ENCODE measurements at regions of chr10 and their contacts with region 1.

Region 1: DNA sequence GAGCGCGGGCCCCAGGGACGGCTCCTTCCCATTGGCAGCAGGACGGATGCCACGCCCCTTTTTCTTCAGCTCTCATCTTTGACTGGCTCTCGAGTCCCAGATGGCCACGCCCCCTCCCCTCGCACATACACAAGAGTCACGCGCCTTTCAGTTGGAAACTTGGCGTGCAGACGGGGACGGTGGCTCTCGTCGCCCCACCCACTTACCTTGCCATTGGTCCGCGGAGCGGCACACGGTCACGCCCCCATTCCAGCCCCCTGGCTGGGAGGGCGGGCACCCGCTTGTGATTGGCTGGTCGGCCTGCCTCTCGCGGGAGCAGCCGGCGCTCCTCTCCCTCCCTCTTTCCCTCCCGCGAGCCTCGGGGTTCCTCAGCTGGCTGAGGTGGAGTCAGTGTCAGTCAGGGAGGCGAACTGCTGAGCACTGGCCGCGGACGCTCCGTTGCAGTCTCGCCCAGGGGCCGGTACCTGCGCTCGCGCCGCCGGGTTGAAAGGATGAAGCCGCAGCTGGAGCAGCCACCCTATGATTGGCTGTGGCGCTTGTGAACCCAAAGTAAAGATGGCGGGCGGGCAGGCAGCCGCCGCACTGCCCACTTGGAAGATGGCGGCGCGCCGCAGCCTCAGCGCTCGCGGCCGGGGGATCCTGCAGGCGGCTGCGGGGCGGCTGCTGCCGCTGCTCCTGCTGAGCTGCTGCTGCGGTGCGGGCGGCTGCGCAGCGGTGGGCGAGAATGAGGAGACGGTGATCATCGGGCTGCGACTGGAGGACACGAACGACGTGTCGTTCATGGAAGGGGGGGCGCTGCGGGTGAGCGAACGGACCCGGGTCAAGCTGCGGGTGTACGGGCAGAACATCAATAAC is at the start of gene CNNM2:
- DNase-seq: peak; percentile 96 to 100 (median 100)
- ATAC-seq: peak; percentile 88 to 92 (median 91)
- H3K4me3 ChIP-seq: peak within 1 kb of the TSS; percentile 83 to 91
- H3K4me3 Mint-ChIP-seq: peak within 1 kb of the TSS; percentile 91 to 93 (median 92)
- H3K27ac ChIP-seq: peak within 1 kb of the TSS; percentile 72
- H3K27ac Mint-ChIP-seq: peak within 1 kb of the TSS; percentile 90 to 98
- H3K4me1 ChIP-seq: peaks cover 21 to 27% of the 10 kb centered on the region in 2 experiments
- H3K4me1 Mint-ChIP-seq: peaks cover 52 to 55% (median 52%) of the 10 kb centered on the region in 3 donors
- H3K27me3 ChIP-seq: peaks cover 2 to 11% of the 10 kb centered on the region in 2 experiments
- H3K27me3 Mint-ChIP-seq: peaks cover 0 to 11% of the 10 kb centered on the region in 2 donors
- total RNA-seq, gene CNNM2: 11.6 to 15.4 (median 14.2) TPM

Region 2: DNA sequence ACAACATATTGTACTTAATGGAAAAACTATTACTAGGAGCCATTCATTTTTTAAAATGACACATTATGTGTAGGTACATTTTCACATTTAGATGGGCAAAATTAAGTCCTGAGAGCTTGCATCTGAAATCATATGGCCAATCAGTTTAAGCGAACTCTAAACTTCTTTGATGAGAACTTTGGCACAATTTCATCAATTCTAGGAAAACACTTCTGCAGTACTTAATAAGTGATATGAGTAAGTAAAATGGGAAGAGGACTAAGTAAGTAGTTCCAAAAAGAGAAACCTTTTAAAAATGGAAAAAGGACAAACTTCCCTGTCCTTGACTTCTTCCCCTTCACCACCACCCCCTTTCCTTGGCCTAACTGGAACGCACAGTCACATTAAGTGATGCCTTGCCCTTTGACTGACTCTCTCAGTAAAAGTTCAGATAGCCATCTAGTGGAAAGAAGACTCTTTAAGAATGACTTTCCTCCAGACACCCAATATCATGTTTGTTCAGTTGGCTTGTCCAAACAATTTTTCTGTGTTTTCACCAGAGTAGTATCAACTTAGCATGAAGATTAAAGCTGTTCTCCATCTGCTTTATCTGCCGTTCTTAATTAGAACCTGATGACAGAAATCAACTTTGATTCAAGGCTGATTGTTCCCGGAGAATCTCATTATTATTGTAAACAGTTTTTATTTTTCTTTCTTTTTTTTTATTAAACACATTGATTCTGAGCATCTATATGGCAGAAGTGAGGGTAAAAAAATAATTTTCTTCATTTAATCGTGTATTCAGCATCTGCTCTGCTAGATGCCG is 45.0 kb after region 1 on chr10:
- CTCF ChIA-PET with region 1: no interaction called
- POLR2A ChIA-PET with region 1: no interaction called
- DNase-seq: no peak
- ATAC-seq: no peak
- H3K4me3 ChIP-seq: no peak overlapping the region
- H3K4me3 Mint-ChIP-seq: no peak overlapping the region
- H3K27ac ChIP-seq: no peak overlapping the region
- H3K27ac Mint-ChIP-seq: no peak overlapping the region
- H3K4me1 ChIP-seq: no peaks in the 10 kb centered on the region
- H3K4me1 Mint-ChIP-seq: no peaks in the 10 kb centered on the region
- H3K27me3 ChIP-seq: no peaks in the 10 kb centered on the region
- H3K27me3 Mint-ChIP-seq: no peaks in the 10 kb centered on the region

Region 3: DNA sequence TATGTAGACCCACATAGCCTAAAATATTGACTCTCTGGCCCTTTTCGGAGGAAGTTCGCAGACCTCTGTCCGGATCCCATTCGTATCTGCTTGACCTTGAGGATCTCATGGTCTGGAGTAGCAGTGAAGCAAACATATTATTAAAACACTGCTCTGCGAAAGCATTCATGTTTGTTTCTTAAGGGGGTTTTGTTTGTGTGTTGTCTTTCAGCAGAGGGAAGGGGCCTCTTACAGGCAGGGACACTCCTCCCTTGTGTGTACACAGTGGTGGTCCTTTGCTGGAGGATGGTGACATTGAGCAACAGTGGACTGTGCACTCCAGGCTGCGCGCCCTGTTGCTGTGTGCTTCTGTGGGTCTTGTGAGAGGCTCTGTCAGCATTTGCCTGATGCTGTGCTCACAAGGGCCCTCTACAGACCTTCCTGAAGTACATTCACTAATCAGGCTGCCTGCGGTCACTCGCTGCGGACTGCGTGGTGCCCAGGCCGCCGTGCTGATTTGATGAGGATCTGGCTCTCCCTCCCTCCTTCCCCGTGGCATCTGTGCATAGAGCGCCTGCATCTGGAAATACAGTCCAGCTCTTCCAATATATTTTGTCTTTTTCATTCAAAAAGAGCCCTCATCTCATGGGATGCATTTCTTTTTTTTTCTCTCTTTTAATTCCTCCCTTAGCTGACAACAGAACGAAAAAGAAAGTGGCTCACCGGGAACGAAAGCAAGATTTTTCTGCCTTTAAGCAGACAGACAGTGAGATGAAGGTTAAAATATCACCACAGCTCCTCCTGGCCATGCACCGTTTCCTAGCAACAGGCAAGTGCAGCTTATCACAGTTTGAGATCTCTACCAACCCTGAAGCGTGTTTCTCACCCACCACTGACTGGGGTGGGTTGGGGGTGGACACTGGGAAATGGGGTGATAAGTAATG is 135.7 kb after region 1 on chr10:
- CTCF ChIA-PET with region 1: interaction called in 1 of 2 experiments, 15 read pairs
- POLR2A ChIA-PET with region 1: interaction called in 1 of 2 experiments, 3 read pairs
- DNase-seq: peak in 33 of 35 experiments; percentile 22 to 80 (median 51)
- ATAC-seq: peak; percentile 77 to 97 (median 85)
- H3K4me3 ChIP-seq: peak overlapping the region; percentile 42 to 48
- H3K4me3 Mint-ChIP-seq: peak overlapping the region; percentile 77 to 79 (median 79)
- H3K27ac ChIP-seq: peak overlapping the region; percentile 66
- H3K27ac Mint-ChIP-seq: peak overlapping the region; percentile 79 to 91
- H3K4me1 ChIP-seq: peaks cover 7 to 23% of the 10 kb centered on the region in 2 experiments
- H3K4me1 Mint-ChIP-seq: peaks cover 17 to 22% (median 19%) of the 10 kb centered on the region in 3 donors
- H3K27me3 ChIP-seq: no peaks in the 10 kb centered on the region
- H3K27me3 Mint-ChIP-seq: no peaks in the 10 kb centered on the region

Region 4: GRCh38 chr10:103069453-103070331 is 151.5 kb after region 1 on chr10:
- CTCF ChIA-PET with region 1: interaction called, 3 to 11 read pairs
- POLR2A ChIA-PET with region 1: no interaction called
- DNase-seq: peak; percentile 43 to 84 (median 69)
- ATAC-seq: peak; percentile 79 to 91 (median 83)
- H3K4me3 ChIP-seq: no peak overlapping the region
- H3K4me3 Mint-ChIP-seq: peak overlapping the region in 1 of 3 donors; percentile 13
- H3K27ac ChIP-seq: peak overlapping the region; percentile 35
- H3K27ac Mint-ChIP-seq: peak overlapping the region; percentile 58 to 79
- H3K4me1 ChIP-seq: peaks cover 17 to 22% of the 10 kb centered on the region in 2 experiments
- H3K4me1 Mint-ChIP-seq: peaks cover 21 to 29% (median 28%) of the 10 kb centered on the region in 3 donors
- H3K27me3 ChIP-seq: no peaks in the 10 kb centered on the region
- H3K27me3 Mint-ChIP-seq: no peaks in the 10 kb centered on the region

Region 5: GRCh38 chr10:103244663-103245271 is 326.6 kb after region 1 on chr10:
- CTCF ChIA-PET with region 1: interaction called, 4 to 13 read pairs
- POLR2A ChIA-PET with region 1: no interaction called
- DNase-seq: peak; percentile 19 to 80 (median 43)
- ATAC-seq: peak; percentile 60 to 71 (median 67)
- H3K4me3 ChIP-seq: no peak overlapping the region
- H3K4me3 Mint-ChIP-seq: no peak overlapping the region
- H3K27ac ChIP-seq: no peak overlapping the region
- H3K27ac Mint-ChIP-seq: no peak overlapping the region
- H3K4me1 ChIP-seq: peaks cover 0 to 5% of the 10 kb centered on the region in 2 experiments
- H3K4me1 Mint-ChIP-seq: peaks cover 6 to 10% (median 7%) of the 10 kb centered on the region in 3 donors
- H3K27me3 ChIP-seq: peaks cover 0 to 10% of the 10 kb centered on the region in 2 experiments
- H3K27me3 Mint-ChIP-seq: no peaks in the 10 kb centered on the region